ENCODE measurements at regions of chr21 and their contacts with region 1.

Region 1: DNA sequence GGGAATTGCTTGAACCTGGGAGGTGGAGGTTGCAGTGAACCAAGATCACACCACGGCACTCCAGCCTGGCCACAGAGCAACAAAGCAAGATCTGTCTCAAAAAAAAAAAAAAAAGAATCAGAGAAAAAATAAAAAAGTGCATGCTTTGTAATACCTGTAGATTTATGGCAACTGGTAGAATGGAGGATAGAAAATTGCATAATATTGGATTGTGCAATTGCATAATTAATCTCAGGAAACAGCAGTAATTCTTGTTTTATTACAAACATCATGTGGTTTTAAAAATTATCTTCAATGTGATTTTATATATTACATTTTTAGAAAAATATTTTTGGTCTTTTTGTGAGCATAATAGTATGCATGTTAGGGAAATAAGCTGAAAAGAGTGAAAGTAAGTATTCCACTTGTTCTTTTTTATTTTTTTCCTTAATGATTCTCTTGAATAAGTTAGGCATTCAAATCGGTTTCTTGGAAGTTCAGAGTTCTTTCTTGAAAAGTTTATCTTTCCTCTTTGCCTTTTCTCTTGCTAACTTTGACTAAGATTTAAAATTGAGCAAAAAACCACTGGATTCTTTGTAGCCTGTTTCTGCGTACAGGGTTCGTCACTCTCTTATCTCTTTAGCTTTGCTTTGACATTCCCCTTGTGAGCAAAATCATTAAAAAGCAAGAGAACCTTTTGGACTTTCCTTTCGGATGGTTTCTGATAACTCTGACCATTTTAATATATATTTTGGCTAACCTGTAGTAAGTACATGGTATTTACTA is 127.5 kb upstream of the ADAMTS5 start:
- DNase-seq: no peak
- H3K4me3 ChIP-seq: no peak overlapping the region
- H3K27ac ChIP-seq: peak overlapping the region; percentile 31 to 49
- H3K4me1 ChIP-seq: no peaks in the 10 kb centered on the region
- H3K27me3 ChIP-seq: no peaks in the 10 kb centered on the region
- CTCF ChIP-seq: no peak
- POLR2A ChIP-seq: no peak

Region 2: GRCh38 chr21:25944672-25945213 is 1149.6 kb before region 1 on chr21:
- intact Hi-C with region 1: no loop called
- DNase-seq: no peak
- H3K4me3 ChIP-seq: no peak overlapping the region
- H3K27ac ChIP-seq: peak overlapping the region; percentile 34 to 42
- H3K4me1 ChIP-seq: no peaks in the 10 kb centered on the region
- H3K27me3 ChIP-seq: no peaks in the 10 kb centered on the region
- CTCF ChIP-seq: no peak
- POLR2A ChIP-seq: no peak

Region 3: DNA sequence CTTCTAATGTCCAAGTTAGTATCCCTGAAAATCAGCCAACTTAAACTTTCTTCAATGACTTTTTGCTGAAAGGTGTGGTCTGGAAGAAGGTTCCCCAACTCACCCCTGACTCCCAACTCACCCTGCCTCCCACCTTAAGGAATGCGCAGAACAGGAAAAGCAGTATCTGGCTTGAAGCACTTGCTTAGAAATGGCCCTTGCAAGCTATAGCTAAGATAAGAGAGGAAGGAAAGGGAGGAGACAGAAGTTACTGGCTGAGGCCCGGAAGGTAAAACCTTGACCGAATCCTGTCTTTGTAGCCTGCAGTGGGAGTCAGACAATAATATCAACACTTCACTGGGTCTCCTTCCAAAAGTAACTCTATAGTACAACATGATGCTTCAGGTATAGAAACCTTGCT is 524.2 kb before region 1 on chr21:
- intact Hi-C with region 1: no loop called
- DNase-seq: no peak
- H3K4me3 ChIP-seq: peak overlapping the region in 1 of 3 donors; percentile 10
- H3K27ac ChIP-seq: peak overlapping the region in 1 of 2 donors; percentile 61
- H3K4me1 ChIP-seq: no peaks in the 10 kb centered on the region
- H3K27me3 ChIP-seq: peaks cover 0 to 8% of the 10 kb centered on the region in 2 donors
- CTCF ChIP-seq: no peak
- POLR2A ChIP-seq: no peak

Region 4: DNA sequence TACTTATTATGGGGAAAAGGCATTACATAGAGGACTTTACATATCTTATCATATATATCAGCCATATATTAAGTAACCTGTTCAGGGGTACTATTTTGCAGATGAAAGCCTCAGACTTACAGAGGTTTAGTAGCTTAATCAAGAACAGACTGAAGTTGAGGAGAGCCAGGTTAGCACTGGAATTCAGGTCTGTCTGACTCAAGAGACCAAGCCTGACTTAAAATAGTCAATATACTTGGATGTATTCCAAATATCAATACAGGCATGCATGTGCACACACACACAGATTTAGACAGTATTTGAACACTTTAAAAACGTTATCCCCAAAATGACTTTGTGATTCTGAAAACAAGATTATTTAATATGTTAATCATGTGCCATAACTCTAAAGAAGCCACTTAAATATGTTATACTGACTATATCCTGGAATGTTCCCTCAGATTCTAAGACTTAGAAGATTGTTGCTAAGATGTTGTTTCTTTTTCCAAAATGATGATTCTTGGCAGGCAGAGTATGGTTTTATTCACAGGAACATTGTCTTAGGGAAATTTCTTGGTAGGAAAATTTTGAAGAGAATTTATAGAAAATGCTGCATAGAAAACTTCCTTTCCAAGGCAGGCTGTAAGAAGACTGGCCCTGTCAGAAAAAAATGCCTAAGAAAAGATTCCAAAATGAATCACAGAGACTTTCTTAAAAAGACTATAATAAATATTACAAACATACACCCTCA is 310.7 kb before region 1 on chr21:
- intact Hi-C with region 1: loop called (anchors 5 kb)
- DNase-seq: no peak
- H3K4me3 ChIP-seq: no peak overlapping the region
- H3K27ac ChIP-seq: peak overlapping the region; percentile 22 to 29
- H3K4me1 ChIP-seq: no peaks in the 10 kb centered on the region
- H3K27me3 ChIP-seq: no peaks in the 10 kb centered on the region
- CTCF ChIP-seq: no peak
- POLR2A ChIP-seq: no peak

Measured in breast epithelium (tissue), 4 donors.